Dendritic cell treated with granulocyte-macrophage colony-stimulating factor and Interleukin-4, amounts not matched to agents 40 ng/mL and 50 ng/mL, for 4 days (primary cell): ENCODE measurements at regions of chr2 and their contacts with region 1.

Region 1: DNA sequence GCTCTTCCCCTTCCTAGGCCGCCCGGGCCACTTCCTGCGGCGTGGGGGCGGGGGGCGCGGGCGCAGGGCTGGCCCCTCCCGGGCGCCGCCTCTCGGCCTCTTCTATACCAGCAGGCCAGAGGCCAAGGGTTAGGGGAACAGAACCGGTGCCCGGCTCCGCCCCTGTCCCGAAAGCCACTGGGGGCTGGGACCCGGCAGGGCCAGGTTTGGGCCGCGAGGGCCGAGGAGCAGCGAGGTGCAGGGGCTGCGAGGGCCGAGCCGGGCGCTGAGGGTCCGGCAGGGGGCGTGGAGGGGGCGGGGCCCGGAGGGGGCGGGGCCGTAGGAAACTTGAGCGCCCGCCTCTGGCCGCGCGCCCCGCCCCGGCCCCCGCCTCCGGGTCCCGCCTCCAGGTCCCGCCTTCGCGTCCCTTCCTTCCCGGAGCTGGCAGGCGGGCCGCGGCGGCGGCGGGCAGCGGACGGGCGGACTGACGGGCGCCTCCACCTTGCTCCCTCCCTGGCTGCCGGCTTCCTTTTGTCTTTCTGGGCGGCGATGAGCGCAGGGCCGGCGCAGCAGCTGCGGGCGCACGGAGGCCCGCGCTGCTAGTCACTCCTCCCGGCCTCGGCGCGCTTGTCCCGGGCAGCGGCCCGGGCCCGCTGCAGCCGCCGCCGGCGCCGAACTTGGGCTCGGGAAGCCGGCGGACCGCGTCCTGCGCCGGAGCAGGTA is at the start of gene HPCAL1:
- H3K4me3 Mint-ChIP-seq: peak within 1 kb of the TSS; percentile 98
- H3K27ac Mint-ChIP-seq: peak within 1 kb of the TSS; percentile 92
- H3K4me1 Mint-ChIP-seq: peaks cover 71% of the 10 kb centered on the region
- H3K27me3 Mint-ChIP-seq: no peaks in the 10 kb centered on the region

Region 2: GRCh38 chr2:10258726-10259125 is 43.9 kb before region 1 on chr2:
- intact Hi-C with region 1: no loop called
- H3K4me3 Mint-ChIP-seq: no peak overlapping the region
- H3K27ac Mint-ChIP-seq: no peak overlapping the region
- H3K4me1 Mint-ChIP-seq: peaks cover 12% of the 10 kb centered on the region
- H3K27me3 Mint-ChIP-seq: peaks cover 48% of the 10 kb centered on the region

Region 3: GRCh38 chr2:10269711-10270610 is 32.7 kb before region 1 on chr2:
- intact Hi-C with region 1: loop called (anchors 2 kb)
- H3K4me3 Mint-ChIP-seq: no peak overlapping the region
- H3K27ac Mint-ChIP-seq: no peak overlapping the region
- H3K4me1 Mint-ChIP-seq: peaks cover 23% of the 10 kb centered on the region
- H3K27me3 Mint-ChIP-seq: peaks cover 12% of the 10 kb centered on the region

Region 4: GRCh38 chr2:10278029-10278762 is 24.4 kb before region 1 on chr2:
- intact Hi-C with region 1: loop called (anchors 1 kb)
- H3K4me3 Mint-ChIP-seq: peak overlapping the region; percentile 51
- H3K27ac Mint-ChIP-seq: peak overlapping the region; percentile 92
- H3K4me1 Mint-ChIP-seq: peaks cover 63% of the 10 kb centered on the region
- H3K27me3 Mint-ChIP-seq: no peaks in the 10 kb centered on the region

Region 5: DNA sequence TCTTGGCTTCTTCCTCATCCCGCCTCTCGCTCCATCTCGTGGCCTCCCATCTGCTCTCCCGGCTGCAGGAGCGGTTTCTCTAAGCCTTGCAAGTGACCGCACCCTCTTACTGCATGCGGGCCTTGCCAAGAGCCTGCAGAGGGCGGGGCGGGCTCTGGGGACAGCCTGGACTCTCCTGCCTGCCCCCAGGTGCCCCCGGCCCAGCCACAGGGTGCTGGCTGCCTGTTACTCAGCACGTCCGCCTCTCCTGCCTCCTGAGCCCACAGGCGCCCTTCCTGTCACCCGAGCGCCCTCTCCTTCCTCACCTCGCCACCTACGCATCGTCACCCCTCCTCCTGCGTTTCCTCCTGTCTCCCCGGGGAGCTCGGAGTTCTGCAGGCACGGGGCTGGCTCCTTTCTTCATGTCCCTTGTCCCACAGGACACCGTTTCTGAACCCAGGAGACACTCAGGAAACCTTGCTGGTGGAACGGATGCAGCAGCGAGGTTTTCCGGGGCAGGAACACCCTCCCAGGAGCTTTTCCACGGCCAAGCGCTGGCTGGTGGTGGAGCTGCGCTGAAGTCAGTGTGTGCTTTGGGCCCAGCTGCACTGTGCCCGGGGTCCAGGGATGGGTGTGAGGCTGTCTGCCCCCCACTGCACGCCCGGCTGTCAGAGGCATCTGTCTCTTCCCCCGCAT is 28.5 kb after region 1 on chr2:
- intact Hi-C with region 1: loop called (anchors 2 kb)
- H3K4me3 Mint-ChIP-seq: peak overlapping the region; percentile 63
- H3K27ac Mint-ChIP-seq: peak overlapping the region; percentile 95
- H3K4me1 Mint-ChIP-seq: peaks cover 77% of the 10 kb centered on the region
- H3K27me3 Mint-ChIP-seq: no peaks in the 10 kb centered on the region